WTC11 (cell line): ENCODE measurements at regions of chr5 and their contacts with region 1.

Region 1: DNA sequence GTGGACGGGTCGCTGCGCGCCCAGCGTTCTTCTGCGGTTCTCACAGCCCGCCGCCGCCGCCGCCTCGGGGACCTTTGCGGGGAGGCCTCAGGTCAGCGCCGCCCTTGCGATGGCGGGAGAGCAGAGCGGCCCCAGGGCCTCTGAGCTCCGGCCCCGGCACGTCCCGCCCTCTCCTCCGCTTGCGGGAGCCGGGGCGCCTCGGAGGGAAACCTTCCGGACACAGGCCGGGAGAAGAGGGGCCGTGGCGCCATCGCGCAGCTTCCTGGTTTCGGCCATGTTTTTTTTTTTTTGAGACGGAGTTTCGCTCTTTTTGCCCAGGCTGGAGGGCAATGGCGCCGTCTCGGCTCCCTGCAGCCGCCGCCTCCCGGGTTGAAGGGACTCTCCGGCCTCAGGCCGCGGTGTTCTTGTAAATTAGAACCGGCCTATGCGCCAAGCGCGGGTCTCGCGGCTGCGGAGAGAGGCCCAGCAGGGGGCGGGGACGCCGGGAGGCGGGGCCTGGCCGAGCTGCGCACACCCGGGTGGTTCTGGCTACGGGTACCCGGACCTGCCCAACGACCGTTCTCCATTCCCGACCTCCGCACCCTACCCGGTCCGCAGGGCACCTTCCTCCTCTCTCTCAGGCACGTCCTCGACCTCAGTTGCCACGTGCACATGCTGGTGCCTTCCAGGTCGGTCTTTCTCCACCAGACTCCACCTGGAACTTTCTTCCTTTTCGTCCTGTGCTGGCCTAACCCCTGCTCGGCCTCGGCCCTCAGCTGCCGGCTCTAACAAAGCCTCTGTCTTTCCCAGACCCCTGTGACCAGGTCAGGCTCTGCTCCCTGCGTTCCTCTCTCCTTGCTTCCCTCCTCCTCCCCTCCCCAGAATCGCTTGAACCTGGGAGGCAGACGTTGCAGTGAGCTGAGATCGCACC is 28.8 kb upstream of the MGAT1 start:
- DNase-seq: peak; percentile 77
- ATAC-seq: peak; percentile 83
- H3K4me3 Mint-ChIP-seq: peak overlapping the region; percentile 96
- H3K27ac Mint-ChIP-seq: peak overlapping the region; percentile 97
- H3K4me1 Mint-ChIP-seq: peaks cover 19% of the 10 kb centered on the region
- H3K27me3 Mint-ChIP-seq: peaks cover 63% of the 10 kb centered on the region
- CTCF ChIP-seq: no peak

Region 2: GRCh38 chr5:180810210-180810958 is 21.0 kb before region 1 on chr5:
- CTCF ChIA-PET with region 1: interaction called, 4 read pairs
- POLR2A ChIA-PET with region 1: interaction called, 15 read pairs
- DNase-seq: peak; percentile 95
- ATAC-seq: peak; percentile 87
- H3K4me3 Mint-ChIP-seq: peak overlapping the region; percentile 69
- H3K27ac Mint-ChIP-seq: peak overlapping the region; percentile 98
- H3K4me1 Mint-ChIP-seq: peaks cover 60% of the 10 kb centered on the region
- H3K27me3 Mint-ChIP-seq: peaks cover 3% of the 10 kb centered on the region; the same call in 1 of the 2 replicates
- CTCF ChIP-seq: no peak

Region 3: GRCh38 chr5:180860887-180861822 is 29.8 kb after region 1 on chr5 and contains the start of gene ZFP62:
- CTCF ChIA-PET with region 1: interaction called, 7 read pairs
- POLR2A ChIA-PET with region 1: interaction called, 10 read pairs
- DNase-seq: peak; percentile 94
- ATAC-seq: peak; percentile 84
- H3K4me3 Mint-ChIP-seq: peak within 1 kb of the TSS; percentile 89
- H3K27ac Mint-ChIP-seq: peak within 1 kb of the TSS; percentile 96
- H3K4me1 Mint-ChIP-seq: peaks cover 27% of the 10 kb centered on the region
- H3K27me3 Mint-ChIP-seq: no peaks in the 10 kb centered on the region; the same call in 1 of the 2 replicates
- CTCF ChIP-seq: no peak
- total RNA-seq, gene ZFP62: 35.7 to 41.2 TPM (median 39.5 TPM) in 3 replicates